Activated CD4-positive, alpha-beta T cell treated with anti-CD3 and anti-CD28 coated beads for 36 hours (primary cell): ENCODE measurements at regions of chr11 and their contacts with region 1.

Region 1: DNA sequence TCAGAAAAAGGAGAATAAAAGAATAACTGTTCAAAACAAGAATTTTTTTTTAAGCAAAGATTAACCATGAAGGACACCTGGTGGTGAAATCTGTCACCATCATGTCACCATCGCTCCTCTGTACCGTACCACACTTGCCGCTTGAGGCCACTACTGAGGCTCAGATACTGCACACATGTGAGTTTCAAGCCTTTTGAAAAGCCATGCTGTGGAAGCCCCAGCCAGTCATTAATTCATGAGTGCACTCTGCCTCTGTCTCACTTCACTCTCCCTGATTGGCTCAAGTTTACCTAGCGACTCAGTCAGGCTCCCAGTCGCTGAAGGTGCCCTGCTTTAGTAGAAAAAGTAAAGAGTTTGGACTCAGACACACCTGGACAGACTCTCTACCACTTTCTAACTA is 6.6 kb upstream of the MS4A12 start:
- DNase-seq: peak; percentile 46
- ATAC-seq: peak; percentile 74
- H3K4me3 Mint-ChIP-seq: no peak overlapping the region
- H3K27ac Mint-ChIP-seq: no peak overlapping the region
- H3K4me1 Mint-ChIP-seq: peaks cover 3% of the 10 kb centered on the region
- H3K27me3 Mint-ChIP-seq: peaks cover 2% of the 10 kb centered on the region

Region 2: GRCh38 chr11:60265373-60266214 is 220.4 kb before region 1 on chr11:
- CTCF ChIA-PET with region 1: interaction called, 3 read pairs
- POLR2A ChIA-PET with region 1: no interaction called
- intact Hi-C with region 1: loop called (anchors 5 to 10 kb)
- DNase-seq: peak; percentile 26
- ATAC-seq: peak; percentile 55
- H3K4me3 Mint-ChIP-seq: no peak overlapping the region
- H3K27ac Mint-ChIP-seq: no peak overlapping the region
- H3K4me1 Mint-ChIP-seq: no peaks in the 10 kb centered on the region
- H3K27me3 Mint-ChIP-seq: peaks cover 20% of the 10 kb centered on the region

Region 3: DNA sequence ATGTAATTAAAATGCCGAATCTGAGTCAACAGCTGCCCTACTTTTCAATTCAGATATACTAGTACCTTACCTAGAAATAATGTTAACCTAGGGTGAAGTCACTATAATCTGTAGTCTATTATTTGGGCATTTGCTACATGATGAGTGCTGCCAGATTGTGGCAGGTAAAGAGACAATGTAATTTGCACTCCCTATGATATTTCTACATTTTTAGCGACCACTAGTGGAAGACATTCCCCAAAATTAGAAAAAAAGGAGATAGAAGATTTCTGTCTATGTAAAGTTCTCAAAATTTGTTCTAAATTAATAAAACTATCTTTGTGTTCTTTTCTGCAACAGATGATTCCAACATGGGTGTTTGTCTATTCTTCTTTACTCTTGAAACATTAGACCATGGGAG is 16.3 kb before region 1 on chr11:
- CTCF ChIA-PET with region 1: no interaction called
- POLR2A ChIA-PET with region 1: no interaction called
- intact Hi-C with region 1: no loop called
- DNase-seq: no peak
- ATAC-seq: no peak
- H3K4me3 Mint-ChIP-seq: no peak overlapping the region
- H3K27ac Mint-ChIP-seq: no peak overlapping the region
- H3K4me1 Mint-ChIP-seq: no peaks in the 10 kb centered on the region
- H3K27me3 Mint-ChIP-seq: peaks cover 14% of the 10 kb centered on the region